ENCODE measurements at regions of chr9 and their contacts with region 1.

Region 1: DNA sequence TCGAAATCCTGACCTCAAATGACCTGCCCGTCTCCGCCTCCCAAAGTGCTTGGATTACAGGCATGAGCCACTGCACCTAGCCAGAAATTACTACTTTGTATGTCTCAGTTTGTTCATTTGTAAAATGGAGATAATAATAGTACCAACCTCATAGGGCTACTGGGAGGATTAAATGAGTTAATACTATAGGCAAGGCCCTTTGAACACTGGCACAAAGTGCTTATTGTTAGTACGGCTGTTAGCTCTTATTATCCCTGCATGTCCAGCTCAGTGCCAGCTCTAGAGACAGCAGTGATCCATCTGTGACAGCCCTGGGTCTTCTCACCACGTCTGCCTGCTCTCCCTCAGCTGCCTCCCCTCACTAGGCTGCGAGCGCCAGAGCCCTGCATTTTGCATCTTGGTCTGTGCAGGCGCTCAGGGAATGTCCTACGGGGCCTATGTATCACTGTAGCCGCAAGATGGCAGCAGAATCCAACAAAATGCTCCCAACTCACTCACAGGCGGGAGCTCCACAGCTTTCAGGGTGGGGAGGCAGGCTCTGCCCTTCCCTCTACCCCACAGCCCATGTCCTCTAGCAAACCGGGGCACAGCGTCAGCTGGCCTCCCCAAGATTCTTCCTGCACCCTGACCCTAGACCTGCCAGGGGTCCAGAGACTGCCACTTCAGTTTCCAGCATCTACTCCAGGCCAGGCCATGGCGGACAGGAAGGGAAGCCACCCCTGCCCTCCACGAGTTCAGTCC is 17.7 kb upstream of the AKNA start:
- DNase-seq: peak; percentile 89
- H3K4me3 Mint-ChIP-seq: no peak overlapping the region
- H3K27ac Mint-ChIP-seq: no peak overlapping the region
- H3K4me1 Mint-ChIP-seq: peaks cover 5% of the 10 kb centered on the region
- H3K27me3 Mint-ChIP-seq: peaks cover 32% of the 10 kb centered on the region

Region 2: DNA sequence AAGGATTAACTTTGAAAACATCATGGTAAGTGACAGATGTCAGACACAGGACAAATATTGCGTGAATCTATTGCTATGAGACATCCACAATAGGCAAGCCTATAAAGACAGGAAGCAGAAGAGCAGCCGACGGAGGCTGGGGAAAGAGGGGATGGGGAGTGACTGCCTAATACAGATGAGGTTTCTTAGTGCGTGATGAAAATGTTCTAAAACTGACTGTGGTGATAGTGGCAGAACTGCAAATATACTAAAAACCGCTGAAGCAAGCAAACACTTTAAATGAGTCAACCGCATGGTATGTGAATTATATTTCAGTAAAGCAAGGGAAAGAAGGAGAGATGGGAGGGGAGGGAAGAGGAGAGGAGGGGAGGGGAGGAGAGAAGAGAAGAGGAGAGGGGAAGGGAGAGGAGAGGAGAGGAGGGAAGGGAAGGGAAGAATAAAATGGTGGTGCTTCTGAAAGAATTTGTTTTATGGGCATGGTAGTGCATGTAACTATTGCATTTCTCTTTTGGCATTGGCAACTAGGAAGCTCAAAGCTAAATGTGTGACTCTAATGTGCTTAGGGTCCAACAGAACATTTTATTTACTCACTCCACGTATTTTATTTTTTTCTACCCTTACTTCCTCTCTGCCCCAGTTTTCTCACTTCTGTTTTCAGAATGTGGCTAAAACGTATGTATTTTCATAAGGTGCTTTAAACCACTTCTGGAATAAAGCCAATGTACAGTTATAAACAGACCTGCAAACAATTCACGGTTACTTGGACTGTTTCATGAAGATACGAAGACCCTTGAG is 38.9 kb before region 1 on chr9:
- CTCF ChIA-PET with region 1: no interaction called
- DNase-seq: peak; percentile 57
- H3K4me3 Mint-ChIP-seq: peak overlapping the region; percentile 34
- H3K27ac Mint-ChIP-seq: peak overlapping the region; percentile 94
- H3K4me1 Mint-ChIP-seq: peaks cover 89% of the 10 kb centered on the region
- H3K27me3 Mint-ChIP-seq: no peaks in the 10 kb centered on the region

Region 3: DNA sequence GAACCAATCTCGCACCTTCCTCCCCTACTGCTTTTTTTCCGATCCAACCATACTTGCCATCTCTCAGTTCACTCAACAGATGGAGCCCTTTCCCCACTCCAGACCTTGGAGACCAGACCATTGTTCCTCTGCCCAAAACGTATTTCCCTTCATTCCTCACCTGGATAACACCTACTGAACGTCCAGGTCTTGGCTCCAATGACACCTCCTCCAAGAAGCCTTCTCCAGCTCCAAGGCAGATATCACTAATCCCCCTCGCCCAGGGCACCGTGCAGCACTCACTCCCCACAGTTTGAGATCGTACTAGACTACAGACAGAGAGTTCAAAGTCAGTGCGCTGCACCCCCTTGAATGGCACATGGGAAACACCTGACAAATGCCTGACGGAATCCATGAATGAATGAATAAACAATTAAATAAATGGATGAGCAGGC is 29.4 kb after region 1 on chr9:
- CTCF ChIA-PET with region 1: interaction called, 22 read pairs
- DNase-seq: peak; percentile 30
- H3K4me3 Mint-ChIP-seq: no peak overlapping the region
- H3K27ac Mint-ChIP-seq: no peak overlapping the region
- H3K4me1 Mint-ChIP-seq: peaks cover 4% of the 10 kb centered on the region
- H3K27me3 Mint-ChIP-seq: peaks cover 7% of the 10 kb centered on the region

Region 4: GRCh38 chr9:114487607-114488300 is 82.3 kb after region 1 on chr9:
- CTCF ChIA-PET with region 1: interaction called, 28 read pairs
- DNase-seq: peak; percentile 68
- H3K4me3 Mint-ChIP-seq: no peak overlapping the region
- H3K27ac Mint-ChIP-seq: no peak overlapping the region
- H3K4me1 Mint-ChIP-seq: peaks cover 26% of the 10 kb centered on the region
- H3K27me3 Mint-ChIP-seq: peaks cover 13% of the 10 kb centered on the region

Region 5: DNA sequence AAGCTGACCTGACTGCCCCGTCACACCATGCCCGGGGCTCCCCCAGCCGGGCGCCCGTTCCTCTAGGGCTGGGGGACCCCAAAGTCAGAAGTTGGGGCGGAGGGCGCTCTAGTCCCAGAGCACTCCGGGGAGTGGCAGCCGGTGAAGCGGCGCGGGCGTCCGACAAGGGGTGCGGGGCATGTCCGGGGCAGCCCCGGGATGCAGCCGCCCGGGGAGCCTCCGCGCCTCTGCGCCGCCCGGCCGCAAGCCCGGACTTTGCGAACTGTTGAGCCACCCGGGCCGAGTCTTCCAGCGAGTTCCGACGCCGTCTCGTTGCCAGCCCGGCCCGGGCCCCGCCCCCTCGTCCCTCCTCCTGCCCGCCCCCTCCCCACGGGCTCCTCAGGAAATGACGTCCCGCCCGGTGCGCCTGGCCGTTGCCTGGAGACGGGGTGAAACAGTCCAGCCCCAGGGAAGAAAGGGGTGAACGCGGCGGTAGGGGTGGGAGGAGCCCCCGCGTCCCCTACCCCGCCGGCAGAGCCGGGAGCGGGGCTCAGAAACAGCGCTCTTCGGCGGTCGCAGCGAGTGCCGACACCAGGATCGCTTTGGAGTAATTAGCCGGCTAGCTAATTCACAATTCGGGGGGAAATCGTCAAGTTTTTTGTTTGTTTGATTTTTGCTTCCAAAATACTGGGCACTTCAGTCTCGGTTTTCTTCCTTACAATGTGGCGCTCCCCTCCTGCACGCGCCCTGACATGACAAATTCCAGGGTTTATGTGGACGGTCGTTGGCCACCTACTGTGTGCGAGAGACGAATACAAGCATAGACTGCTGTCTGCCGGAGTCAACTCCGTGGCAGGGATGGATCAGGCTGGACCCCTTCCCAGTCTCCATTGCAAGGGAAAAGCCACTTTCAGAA is 100.0 kb after region 1 on chr9 and contains the start of gene WHRN:
- CTCF ChIA-PET with region 1: interaction called, 96 read pairs
- DNase-seq: peak; percentile 94
- H3K4me3 Mint-ChIP-seq: peak within 1 kb of the TSS; percentile 75
- H3K27ac Mint-ChIP-seq: peak within 1 kb of the TSS; percentile 24
- H3K4me1 Mint-ChIP-seq: peaks cover 13% of the 10 kb centered on the region
- H3K27me3 Mint-ChIP-seq: peaks cover 97% of the 10 kb centered on the region

Region 6: GRCh38 chr9:114587385-114588202 is 182.1 kb after region 1 on chr9 and contains the start of gene ATP6V1G1:
- CTCF ChIA-PET with region 1: interaction called, 27 read pairs
- DNase-seq: peak; percentile 100
- H3K4me3 Mint-ChIP-seq: peak within 1 kb of the TSS; percentile 97
- H3K27ac Mint-ChIP-seq: peak within 1 kb of the TSS; percentile 92
- H3K4me1 Mint-ChIP-seq: peaks cover 45% of the 10 kb centered on the region
- H3K27me3 Mint-ChIP-seq: peaks cover 7% of the 10 kb centered on the region

Region 7: GRCh38 chr9:114662081-114662989 is 256.9 kb after region 1 on chr9:
- CTCF ChIA-PET with region 1: interaction called, 16 read pairs
- DNase-seq: peak; percentile 77
- H3K4me3 Mint-ChIP-seq: no peak overlapping the region
- H3K27ac Mint-ChIP-seq: no peak overlapping the region
- H3K4me1 Mint-ChIP-seq: peaks cover 4% of the 10 kb centered on the region
- H3K27me3 Mint-ChIP-seq: peaks cover 30% of the 10 kb centered on the region